AG04449 (cell line): ENCODE measurements at regions of chr13 and their contacts with region 1.

Region 1: GRCh38 chr13:49606747-49607648 is 21.3 kb upstream of the ARL11 start:
- DNase-seq: peak; percentile 44
- H3K4me3 ChIP-seq: peak overlapping the region; percentile 12; the same call in 1 of the 2 replicates
- CTCF ChIP-seq: peak; percentile 81

Region 2: DNA sequence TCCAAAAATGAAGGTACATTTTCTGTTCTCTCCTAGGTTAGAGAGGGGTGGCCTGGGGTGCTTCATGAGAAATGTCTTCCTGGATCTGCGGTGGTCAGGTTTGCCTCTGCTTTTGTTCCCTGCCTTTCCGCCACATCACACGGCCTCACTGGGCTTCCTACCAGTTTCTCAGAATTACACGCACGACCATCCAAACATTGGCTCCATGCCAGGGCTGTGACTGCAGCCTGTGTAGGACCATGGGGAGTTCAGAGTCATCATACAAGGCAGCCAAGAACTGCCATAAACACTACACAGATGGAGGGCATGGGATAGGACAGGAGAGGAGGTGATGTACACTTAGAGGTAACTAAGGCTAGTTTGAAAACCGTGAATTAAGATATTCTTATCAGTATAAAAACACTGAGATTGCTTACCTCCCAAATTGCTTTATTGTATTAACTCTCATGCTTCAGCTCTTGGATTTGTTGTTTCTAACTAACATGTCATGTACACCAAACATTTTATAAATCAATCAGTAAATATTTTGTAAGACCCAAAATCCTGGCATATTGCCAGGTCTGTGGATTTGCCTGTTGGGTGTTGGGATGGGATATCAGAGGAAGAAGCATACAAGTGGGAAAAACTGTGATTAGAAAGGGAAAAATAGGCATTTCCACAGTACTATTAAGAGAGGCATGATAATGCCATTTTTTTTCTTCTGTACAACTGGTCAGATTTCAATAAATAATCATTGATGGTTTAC is 314.1 kb before region 1 on chr13:
- CTCF ChIA-PET with region 1: interaction called, 14 read pairs
- POLR2A ChIA-PET with region 1: no interaction called
- DNase-seq: no peak
- H3K4me3 ChIP-seq: no peak overlapping the region
- CTCF ChIP-seq: no peak

Region 3: DNA sequence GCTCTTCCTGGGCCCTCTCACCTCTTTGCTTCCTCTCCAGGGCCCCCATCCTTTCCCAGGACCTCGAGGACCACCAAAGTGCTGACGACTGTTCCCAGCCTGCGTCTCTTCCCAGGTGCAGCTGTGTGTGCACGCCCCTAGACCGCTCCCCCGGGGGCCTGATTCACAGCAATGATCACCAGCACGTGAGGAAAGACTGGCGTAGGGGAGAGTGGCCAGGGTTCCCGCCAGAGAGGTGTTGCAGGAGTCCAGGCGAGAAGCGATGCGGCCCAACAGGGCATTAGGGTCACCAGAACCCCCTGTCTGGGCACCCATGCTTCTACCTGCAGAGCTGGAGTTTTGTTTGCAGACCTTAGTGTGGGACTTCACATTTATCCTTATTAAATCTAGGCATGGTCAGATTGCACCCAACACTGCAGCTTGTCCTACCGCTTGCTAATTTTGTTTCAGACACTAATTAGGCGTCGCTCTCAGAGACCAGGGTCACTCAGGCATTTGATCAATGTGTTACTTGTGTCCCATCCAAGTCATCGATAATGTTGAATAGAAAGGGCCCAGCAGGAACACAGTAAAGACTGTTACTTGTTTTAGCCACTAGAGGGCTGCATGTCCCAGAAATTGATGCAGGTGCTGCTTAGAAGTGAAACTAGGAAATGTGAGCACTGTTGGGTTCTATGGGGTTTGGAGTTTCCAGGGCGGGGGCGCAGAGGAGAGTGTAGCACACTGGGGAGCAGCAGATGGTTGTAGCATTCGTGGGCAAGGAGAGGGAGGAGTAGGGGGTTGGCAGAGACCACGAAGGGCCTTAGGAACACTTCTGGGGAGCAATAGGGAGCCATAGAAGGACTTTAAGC is 306.0 kb before region 1 on chr13:
- CTCF ChIA-PET with region 1: interaction called, 14 read pairs
- POLR2A ChIA-PET with region 1: no interaction called
- DNase-seq: no peak
- H3K4me3 ChIP-seq: no peak overlapping the region
- CTCF ChIP-seq: peak; percentile 76

Region 4: DNA sequence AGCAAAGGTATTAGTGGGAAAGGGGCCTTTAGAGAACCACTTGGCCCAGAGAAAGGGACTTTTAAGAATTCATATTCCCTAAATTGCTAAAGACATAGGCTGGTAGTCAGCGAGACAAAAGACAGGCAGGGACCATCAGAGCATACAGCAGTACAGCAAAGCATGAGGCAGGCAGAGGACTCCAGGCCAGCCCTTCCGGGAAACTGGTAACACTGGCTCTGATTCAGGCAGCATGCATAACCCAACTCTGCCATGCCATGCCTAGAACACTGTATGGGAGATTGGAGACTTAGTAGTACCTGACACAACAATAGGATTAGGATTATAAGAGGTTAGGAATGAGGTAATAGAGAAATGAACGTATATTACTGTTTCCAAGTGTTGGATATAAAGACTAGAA is 198.0 kb before region 1 on chr13:
- CTCF ChIA-PET with region 1: no interaction called
- POLR2A ChIA-PET with region 1: no interaction called
- DNase-seq: no peak
- H3K4me3 ChIP-seq: no peak overlapping the region
- CTCF ChIP-seq: no peak